IMR-90 (cell line): ENCODE measurements at regions of chr7 and their contacts with region 1.

Region 1: DNA sequence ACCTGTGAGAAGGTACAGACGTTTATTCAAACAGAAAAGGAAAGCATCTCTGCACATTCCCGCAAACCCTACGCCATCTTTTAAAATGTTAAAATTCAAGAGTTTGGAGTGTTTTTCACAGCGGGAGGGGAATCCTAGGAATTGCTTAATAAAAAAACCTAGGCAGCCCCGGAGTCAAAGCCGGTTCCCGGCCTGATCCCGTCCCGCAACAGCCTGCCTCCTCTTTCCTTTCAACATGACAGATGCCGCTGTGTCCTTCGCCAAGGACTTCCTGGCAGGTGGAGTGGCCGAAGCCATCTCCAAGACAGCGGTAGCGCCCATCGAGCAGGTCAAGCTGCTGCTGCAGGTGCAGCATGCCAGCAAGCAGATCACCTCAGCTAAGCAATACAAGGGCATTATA is 123.0 kb upstream of the VSTM2A start:
- DNase-seq: no peak
- ATAC-seq: no peak
- H3K4me3 ChIP-seq: no peak overlapping the region
- H3K27ac ChIP-seq: no peak overlapping the region
- H3K4me1 ChIP-seq: no peaks in the 10 kb centered on the region
- H3K27me3 ChIP-seq: no peaks in the 10 kb centered on the region
- CTCF ChIP-seq: no peak
- POLR2A ChIP-seq: no peak
- RAD21 ChIP-seq: no peak

Region 2: DNA sequence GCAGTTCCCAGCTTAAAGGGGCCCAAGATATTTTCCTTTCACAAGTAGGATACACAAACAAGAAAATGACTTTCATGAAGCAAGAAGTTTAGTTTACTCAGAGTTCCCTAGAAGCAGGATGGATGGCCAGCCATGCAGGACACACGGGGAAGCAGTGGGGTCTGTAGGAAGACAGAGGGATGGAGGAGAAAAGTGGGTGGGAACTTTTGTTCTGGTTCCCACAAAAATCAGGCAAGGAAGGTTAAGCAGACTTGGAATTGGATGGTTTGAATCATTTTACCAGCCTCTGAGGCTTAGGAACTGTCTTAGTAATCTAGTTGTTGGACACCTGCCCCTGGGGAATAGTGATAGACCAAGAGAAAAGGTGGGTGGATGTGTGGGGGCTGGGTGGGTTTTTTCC is 140.4 kb before region 1 on chr7:
- CTCF ChIA-PET with region 1: interaction called, 12 read pairs
- POLR2A ChIA-PET with region 1: no interaction called
- dilution Hi-C with region 1: no loop called
- in situ Hi-C with region 1: no loop called
- intact Hi-C with region 1: no loop called
- DNase-seq: no peak
- ATAC-seq: no peak
- H3K4me3 ChIP-seq: no peak overlapping the region
- H3K27ac ChIP-seq: no peak overlapping the region
- H3K4me1 ChIP-seq: no peaks in the 10 kb centered on the region
- H3K27me3 ChIP-seq: no peaks in the 10 kb centered on the region
- CTCF ChIP-seq: no peak
- POLR2A ChIP-seq: no peak
- RAD21 ChIP-seq: no peak